Activated naive CD4-positive, alpha-beta T cell treated with anti-CD3 and anti-CD28 coated beads for 36 hours (primary cell): ENCODE measurements at regions of chr1 and their contacts with region 1.

Region 1: DNA sequence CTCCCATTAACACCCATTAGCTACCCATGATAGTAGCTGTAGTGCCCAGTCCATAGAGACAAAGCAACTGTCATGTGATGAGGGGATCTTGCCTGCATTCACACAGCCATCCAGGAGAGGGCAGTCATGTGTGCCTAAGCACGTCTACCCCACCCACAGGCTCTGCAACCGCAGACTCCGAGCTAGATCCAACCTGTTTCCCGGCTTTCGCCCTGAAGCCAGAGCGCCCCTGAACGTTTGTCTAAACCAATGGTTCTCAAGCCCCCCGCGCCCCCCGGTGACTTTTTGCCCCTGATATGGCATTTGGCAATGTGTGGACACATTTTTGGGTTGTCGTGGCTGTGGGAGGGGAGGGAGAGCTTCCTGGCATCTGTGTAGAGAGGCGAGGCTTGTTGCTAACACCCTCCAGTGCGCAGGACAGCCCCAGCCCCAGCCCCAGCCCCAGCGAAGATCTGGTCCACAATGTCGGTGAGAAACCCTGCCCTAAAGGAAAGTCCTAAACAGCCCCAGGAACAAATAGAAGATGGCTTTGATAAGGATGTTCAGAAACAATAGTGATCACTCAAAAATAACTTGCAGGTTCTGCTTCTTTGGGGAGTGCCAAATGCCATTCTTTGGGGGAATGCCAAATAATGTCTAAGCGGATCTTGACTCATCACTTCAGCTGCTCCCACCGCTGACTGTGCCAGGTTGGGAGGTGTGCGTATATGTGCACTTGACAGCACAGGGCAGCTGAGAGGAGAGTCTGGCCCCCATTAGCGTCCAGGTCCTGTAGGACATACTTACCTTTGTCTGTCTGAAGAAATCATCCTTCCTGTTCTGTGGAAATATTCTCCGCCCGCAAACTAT is 34.5 kb downstream of the SLC44A3 start:
- DNase-seq: peak; percentile 91
- H3K4me3 Mint-ChIP-seq: no peak overlapping the region
- H3K27ac Mint-ChIP-seq: no peak overlapping the region
- H3K4me1 Mint-ChIP-seq: no peaks in the 10 kb centered on the region
- H3K27me3 Mint-ChIP-seq: peaks cover 3% of the 10 kb centered on the region

Region 2: GRCh38 chr1:94562519-94563260 is 292.0 kb before region 1 on chr1:
- CTCF ChIA-PET with region 1: no interaction called
- intact Hi-C with region 1: no loop called
- DNase-seq: no peak
- H3K4me3 Mint-ChIP-seq: no peak overlapping the region
- H3K27ac Mint-ChIP-seq: no peak overlapping the region
- H3K4me1 Mint-ChIP-seq: no peaks in the 10 kb centered on the region
- H3K27me3 Mint-ChIP-seq: no peaks in the 10 kb centered on the region

Region 3: GRCh38 chr1:94843430-94843829 is 11.3 kb before region 1 on chr1:
- CTCF ChIA-PET with region 1: interaction called, 24 read pairs
- intact Hi-C with region 1: no loop called
- DNase-seq: no peak
- H3K4me3 Mint-ChIP-seq: no peak overlapping the region
- H3K27ac Mint-ChIP-seq: no peak overlapping the region
- H3K4me1 Mint-ChIP-seq: no peaks in the 10 kb centered on the region
- H3K27me3 Mint-ChIP-seq: peaks cover 3% of the 10 kb centered on the region

Region 4: GRCh38 chr1:94892604-94893254 is 38.0 kb after region 1 on chr1:
- CTCF ChIA-PET with region 1: no interaction called
- intact Hi-C with region 1: no loop called
- DNase-seq: no peak
- H3K4me3 Mint-ChIP-seq: no peak overlapping the region
- H3K27ac Mint-ChIP-seq: no peak overlapping the region
- H3K4me1 Mint-ChIP-seq: no peaks in the 10 kb centered on the region
- H3K27me3 Mint-ChIP-seq: no peaks in the 10 kb centered on the region

Region 5: DNA sequence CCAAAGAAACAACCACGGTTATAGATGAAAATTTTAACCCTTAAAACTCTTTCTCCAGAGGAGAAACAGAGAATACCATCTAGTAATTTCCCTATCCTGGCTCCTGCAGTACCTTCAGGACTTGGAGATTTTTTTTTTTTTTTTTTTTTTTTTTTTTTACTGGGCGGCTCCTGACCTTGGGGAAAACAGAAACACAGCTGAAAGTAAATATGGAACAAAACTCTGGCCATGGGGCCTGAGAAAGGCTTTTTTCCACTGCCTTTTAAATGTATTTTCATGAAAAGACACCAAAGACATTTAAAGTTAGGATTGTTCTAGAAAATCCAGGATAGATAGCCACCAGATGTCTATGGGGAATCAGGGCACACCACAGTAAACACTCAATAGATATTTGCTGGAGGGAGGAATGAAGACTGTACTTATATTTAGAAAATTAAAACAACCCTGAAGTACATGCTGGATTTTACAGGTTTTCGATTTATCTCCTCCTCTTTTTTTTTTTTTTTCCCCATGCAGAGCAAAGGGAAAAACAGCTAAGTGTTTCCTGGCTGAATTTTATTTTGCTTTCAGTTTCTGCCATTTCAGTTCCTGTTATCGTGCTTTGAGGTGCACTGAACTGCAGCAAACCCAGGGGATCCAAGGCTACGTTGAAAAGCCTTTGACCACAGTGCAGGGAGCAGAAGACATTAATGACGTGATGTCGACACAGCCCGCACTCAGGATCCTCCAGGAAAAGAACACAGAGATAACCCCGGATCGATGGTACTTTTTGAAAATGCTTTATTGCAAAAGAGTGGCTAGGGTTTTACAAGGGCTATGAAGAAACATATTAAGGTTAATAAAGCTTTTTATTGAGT is 108.0 kb after region 1 on chr1:
- CTCF ChIA-PET with region 1: interaction called, 9 read pairs
- intact Hi-C with region 1: loop called (anchors 1 kb)
- DNase-seq: peak; percentile 48
- H3K4me3 Mint-ChIP-seq: peak overlapping the region; percentile 84
- H3K27ac Mint-ChIP-seq: peak overlapping the region; percentile 84
- H3K4me1 Mint-ChIP-seq: peaks cover 8% of the 10 kb centered on the region
- H3K27me3 Mint-ChIP-seq: no peaks in the 10 kb centered on the region

Region 6: DNA sequence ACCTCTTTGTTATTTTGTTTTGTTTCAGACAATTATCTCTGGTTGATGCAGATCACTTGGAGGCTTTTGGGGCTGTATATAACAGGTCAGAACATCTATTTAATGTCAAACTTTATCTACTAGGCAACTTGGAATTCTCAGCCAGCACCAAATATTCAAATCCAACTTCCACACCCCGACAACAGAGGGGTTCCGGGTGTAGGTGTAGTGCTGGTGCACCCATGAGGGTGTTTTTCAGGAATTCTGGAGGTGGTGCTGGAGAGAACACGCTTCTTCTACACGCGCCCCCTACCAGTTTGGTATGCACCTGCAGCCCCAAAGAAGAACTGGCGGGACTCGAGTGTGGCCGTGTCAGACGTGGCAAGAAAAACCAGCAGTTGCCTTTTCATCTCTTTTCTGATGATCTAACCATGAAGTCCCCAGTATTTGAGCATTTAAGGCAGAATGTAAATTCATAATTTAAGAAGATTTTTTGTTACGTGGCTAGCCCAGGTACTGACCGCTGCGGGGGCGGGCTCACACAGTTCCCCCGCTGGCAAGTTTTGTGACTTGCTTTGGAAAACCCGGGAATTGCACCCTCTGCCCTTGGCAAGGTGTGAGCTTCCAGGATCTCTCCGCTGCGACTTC is 262.0 kb after region 1 on chr1:
- CTCF ChIA-PET with region 1: interaction called, 3 read pairs
- intact Hi-C with region 1: loop called (anchors 2 kb)
- DNase-seq: peak; percentile 68
- H3K4me3 Mint-ChIP-seq: peak overlapping the region; percentile 76
- H3K27ac Mint-ChIP-seq: no peak overlapping the region
- H3K4me1 Mint-ChIP-seq: peaks cover 3% of the 10 kb centered on the region
- H3K27me3 Mint-ChIP-seq: peaks cover 24% of the 10 kb centered on the region